ENCODE measurements at regions of chr17 and their contacts with region 1.

Region 1: GRCh38 chr17:49941427-49941826 is 27.6 kb upstream of the DLX4 start:
- DNase-seq: no peak
- H3K4me3 ChIP-seq: no peak overlapping the region
- H3K27ac ChIP-seq: no peak overlapping the region
- H3K27me3 ChIP-seq: peaks cover 75% of the 10 kb centered on the region
- CTCF ChIP-seq: no peak

Region 2: DNA sequence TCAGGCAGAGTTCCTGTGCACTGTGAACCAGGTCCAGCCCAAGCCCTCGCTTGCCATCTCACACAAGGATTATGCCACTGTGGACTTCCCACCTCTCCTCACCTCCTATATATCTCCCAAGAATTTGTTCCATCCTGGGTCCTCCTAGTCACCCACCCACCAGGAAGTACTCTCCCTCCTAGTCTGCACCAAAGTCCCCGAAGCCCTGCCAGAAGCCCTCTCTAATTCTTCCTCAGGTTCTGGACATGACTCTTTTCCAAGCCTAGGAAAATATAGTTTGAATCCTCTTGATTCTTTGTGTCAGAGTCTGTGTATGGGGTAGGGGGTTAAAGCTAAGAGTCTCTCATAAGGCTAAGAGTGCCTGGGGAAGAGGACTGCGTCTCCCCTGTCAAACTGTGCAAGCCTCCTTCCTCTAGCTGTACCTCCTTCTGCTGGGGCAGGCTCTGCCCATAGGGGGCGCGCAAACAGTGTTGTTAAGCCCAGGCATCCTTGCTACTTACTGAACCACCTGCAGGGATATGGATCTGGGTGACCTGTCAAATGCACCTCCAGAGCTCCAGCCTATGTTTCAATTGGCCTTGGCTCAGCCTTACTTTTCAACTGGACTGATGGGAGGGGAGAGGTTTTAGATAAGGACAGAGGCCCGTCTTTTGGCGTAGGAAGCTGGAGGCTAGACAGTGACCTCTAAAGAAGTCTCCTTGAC is 10.9 kb after region 1 on chr17:
- CTCF ChIA-PET with region 1: interaction called, 12 read pairs
- POLR2A ChIA-PET with region 1: no interaction called
- DNase-seq: peak; percentile 11
- H3K4me3 ChIP-seq: no peak overlapping the region
- H3K27ac ChIP-seq: no peak overlapping the region
- H3K27me3 ChIP-seq: peaks cover 57% of the 10 kb centered on the region
- CTCF ChIP-seq: peak; percentile 79

Measured in AG04450 (cell line).